SK-N-SH (cell line): ENCODE measurements at regions of chr3 and their contacts with region 1.

Region 1: GRCh38 chr3:16177962-16178627 is 3.6 kb downstream of the GALNT15 start:
- DNase-seq: peak; percentile 88
- H3K4me3 ChIP-seq: peak overlapping the region in 1 of 2 experiments; percentile 51; a peak in 2 of 4 replicates
- H3K27ac ChIP-seq: peak overlapping the region in 1 of 2 experiments; percentile 71; a peak in 2 of 4 replicates
- H3K4me1 ChIP-seq: peaks cover 14 to 15% of the 10 kb centered on the region in 2 experiments
- H3K27me3 ChIP-seq: no peaks in the 10 kb centered on the region
- CTCF ChIP-seq: peak; percentile 96
- EP300 ChIP-seq: peak in 1 of 2 experiments; percentile 27; a peak in 1 of 4 replicates
- RAD21 ChIP-seq: peak; percentile 93

Region 2: GRCh38 chr3:16040991-16041390 is 137.1 kb before region 1 on chr3:
- CTCF ChIA-PET with region 1: interaction called, 160 read pairs
- POLR2A ChIA-PET with region 1: no interaction called
- DNase-seq: no peak
- H3K4me3 ChIP-seq: no peak overlapping the region
- H3K27ac ChIP-seq: no peak overlapping the region
- H3K4me1 ChIP-seq: no peaks in the 10 kb centered on the region
- H3K27me3 ChIP-seq: no peaks in the 10 kb centered on the region
- CTCF ChIP-seq: no peak
- EP300 ChIP-seq: no peak
- RAD21 ChIP-seq: no peak

Region 3: GRCh38 chr3:16060358-16060852 is 117.7 kb before region 1 on chr3:
- CTCF ChIA-PET with region 1: interaction called, 16 read pairs
- POLR2A ChIA-PET with region 1: no interaction called
- DNase-seq: no peak
- H3K4me3 ChIP-seq: no peak overlapping the region
- H3K27ac ChIP-seq: peak overlapping the region; percentile 1 to 99; a peak in 3 of 4 replicates
- H3K4me1 ChIP-seq: peaks cover 3 to 32% of the 10 kb centered on the region in 2 experiments
- H3K27me3 ChIP-seq: no peaks in the 10 kb centered on the region
- CTCF ChIP-seq: peak; percentile 49
- EP300 ChIP-seq: peak in 1 of 2 experiments; percentile 92; a peak in 2 of 4 replicates
- RAD21 ChIP-seq: peak; percentile 31; the same call in 1 of the 2 replicates

Region 4: DNA sequence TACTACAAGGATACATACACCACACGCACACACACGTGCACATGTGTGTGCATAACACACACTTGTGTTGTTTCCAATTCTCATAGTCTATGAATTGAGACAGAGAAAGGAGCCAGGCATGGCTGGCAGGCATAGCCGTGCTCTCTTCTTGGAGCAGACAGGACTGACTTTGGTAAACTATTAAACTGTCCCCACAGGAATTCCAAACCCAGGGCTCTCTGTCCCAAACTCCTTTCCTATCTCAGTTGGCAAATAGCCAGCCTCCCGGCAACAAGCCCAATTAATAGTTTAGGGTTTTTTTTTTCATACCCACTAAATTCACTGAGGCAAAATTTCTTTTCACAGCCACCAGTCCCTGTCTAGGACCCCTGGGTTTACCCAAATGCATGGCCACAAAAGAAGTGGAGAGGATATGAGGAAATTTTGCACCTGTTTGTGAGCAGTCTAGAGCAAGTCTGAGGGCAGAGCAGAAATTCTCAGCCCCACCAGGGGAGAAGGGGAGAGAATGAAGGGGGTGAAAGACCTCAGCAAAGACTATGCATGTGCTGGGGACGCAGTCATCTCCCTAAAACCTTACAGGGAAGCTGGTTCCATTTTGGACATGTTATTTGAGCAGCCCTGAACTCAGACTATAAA is 14.2 kb after region 1 on chr3:
- CTCF ChIA-PET with region 1: interaction called, 22 read pairs
- POLR2A ChIA-PET with region 1: no interaction called
- DNase-seq: no peak
- H3K4me3 ChIP-seq: no peak overlapping the region
- H3K27ac ChIP-seq: no peak overlapping the region
- H3K4me1 ChIP-seq: no peaks in the 10 kb centered on the region
- H3K27me3 ChIP-seq: no peaks in the 10 kb centered on the region
- CTCF ChIP-seq: no peak
- EP300 ChIP-seq: no peak
- RAD21 ChIP-seq: no peak

Region 5: DNA sequence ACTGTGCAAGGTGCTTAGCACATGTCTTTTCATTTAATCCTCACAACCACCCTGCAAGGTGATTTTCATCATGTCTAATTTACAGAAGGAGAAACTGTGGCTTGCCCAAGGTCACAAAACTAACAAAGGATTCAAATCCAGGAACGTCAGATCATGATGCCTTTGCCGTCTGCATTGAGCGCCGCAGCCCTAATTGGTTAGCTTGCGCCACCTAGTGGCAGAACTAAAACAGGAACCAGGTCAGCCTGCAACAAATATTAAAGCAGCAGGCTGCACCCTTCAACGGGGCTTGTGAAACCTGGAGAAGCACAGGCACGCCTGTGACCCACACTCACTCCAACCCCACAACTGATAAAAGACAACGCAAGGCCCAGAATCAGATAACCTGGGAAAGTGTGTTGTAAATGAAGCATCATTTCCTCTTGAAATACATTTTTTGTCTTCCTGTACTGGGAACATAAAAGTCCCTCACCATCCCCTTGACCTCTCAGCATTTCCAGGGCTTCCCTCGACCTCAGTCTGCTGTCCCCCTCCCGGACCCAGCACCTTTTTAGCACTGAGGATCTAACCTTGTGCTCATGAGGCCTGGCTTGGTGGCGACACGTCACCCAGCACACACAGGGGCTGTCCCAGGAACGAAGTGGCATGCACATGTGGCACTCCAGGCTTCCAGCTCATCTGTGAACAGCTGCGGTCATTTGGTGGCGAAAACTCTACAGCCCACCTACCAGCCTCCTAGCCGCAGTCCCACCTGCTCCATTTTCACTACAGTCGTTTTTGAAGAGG is 69.4 kb after region 1 on chr3:
- CTCF ChIA-PET with region 1: interaction called, 15 read pairs
- POLR2A ChIA-PET with region 1: no interaction called
- DNase-seq: peak; percentile 76
- H3K4me3 ChIP-seq: no peak overlapping the region; a peak in 1 of 4 replicates
- H3K27ac ChIP-seq: no peak overlapping the region
- H3K4me1 ChIP-seq: peaks cover 0 to 11% of the 10 kb centered on the region in 2 experiments; a peak in 1 of 4 replicates
- H3K27me3 ChIP-seq: no peaks in the 10 kb centered on the region
- CTCF ChIP-seq: peak; percentile 91
- EP300 ChIP-seq: no peak
- RAD21 ChIP-seq: peak; percentile 95

Region 6: DNA sequence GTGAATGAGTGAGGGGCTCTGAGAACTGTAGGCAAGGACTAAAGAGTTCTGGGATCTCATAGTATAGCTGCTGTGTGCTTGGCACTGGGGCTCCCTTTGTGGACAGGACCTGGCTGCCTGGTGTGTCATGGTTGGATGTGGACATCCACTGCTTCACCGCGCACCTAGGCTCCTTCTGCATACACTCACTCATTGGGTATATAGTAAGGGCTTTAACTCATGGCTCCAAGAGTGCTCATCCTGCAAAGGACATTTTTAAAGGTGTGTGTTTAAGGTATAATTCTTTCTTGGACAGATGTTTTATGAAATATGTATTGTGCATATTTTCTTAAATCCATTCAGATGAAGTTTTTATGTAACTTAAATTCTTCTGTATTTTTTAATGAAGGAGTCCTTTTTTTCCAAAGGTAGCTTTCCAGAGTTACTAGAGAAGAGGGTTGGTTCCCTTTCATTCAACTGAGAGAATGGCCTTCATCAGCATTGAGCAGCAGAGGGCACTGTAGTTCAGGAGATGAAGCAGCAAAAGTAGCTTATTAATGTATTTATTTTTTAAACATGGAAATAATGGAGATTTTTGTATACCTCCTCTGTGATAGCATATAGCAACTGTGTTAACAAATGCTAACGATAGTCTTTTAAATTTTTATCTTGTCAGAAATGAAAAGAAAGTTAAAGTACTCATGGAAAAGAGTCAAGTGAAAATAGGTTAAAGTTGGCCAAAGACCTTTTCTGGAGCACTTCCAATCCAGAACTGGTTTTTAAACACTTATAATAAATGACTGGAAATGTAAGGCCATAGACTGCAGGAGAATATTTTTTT is 112.1 kb after region 1 on chr3:
- CTCF ChIA-PET with region 1: no interaction called
- POLR2A ChIA-PET with region 1: no interaction called
- DNase-seq: peak; percentile 30
- H3K4me3 ChIP-seq: peak overlapping the region in 1 of 2 experiments; percentile 33; a peak in 1 of 4 replicates
- H3K27ac ChIP-seq: peak overlapping the region in 1 of 2 experiments; percentile 76; a peak in 2 of 4 replicates
- H3K4me1 ChIP-seq: peaks cover 0 to 11% of the 10 kb centered on the region in 2 experiments; a peak in 2 of 4 replicates
- H3K27me3 ChIP-seq: no peaks in the 10 kb centered on the region
- CTCF ChIP-seq: peak; percentile 96
- EP300 ChIP-seq: no peak
- RAD21 ChIP-seq: peak; percentile 97

Region 7: GRCh38 chr3:16511681-16512434 is 333.8 kb after region 1 on chr3:
- CTCF ChIA-PET with region 1: no interaction called
- POLR2A ChIA-PET with region 1: no interaction called
- DNase-seq: no peak
- H3K4me3 ChIP-seq: peak overlapping the region; percentile 86 to 96
- H3K27ac ChIP-seq: peak overlapping the region; percentile 67 to 100
- H3K4me1 ChIP-seq: peaks cover 9 to 58% of the 10 kb centered on the region in 2 experiments; a peak in 3 of 4 replicates
- H3K27me3 ChIP-seq: no peaks in the 10 kb centered on the region
- CTCF ChIP-seq: peak; percentile 12; the same call in 1 of the 2 replicates
- EP300 ChIP-seq: no peak
- RAD21 ChIP-seq: no peak; the same call in 1 of the 2 replicates